ENCODE measurements at regions of chr9 and their contacts with region 1.

Region 1: DNA sequence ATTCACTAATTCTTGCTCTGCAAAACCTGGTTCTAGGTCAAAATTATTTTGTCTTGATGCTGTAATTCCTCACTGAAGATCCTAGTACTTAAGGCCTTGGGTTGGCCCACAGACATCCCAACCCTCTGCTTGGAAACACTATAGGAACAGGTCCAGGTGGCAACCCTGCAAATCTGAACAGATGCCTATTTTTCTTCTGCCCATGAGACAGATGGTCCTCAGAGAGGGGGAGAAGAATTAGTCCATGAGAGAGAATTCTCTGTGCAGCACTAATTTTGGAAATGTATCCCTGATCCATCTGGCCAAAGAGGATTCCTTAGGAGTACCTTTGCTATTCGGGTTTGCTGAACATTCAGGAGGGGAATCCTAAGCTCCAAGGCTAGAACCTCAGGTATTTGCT is 156.3 kb downstream of the ELAVL2 start:
- DNase-seq: no peak
- ATAC-seq: no peak
- H3K4me3 ChIP-seq: no peak overlapping the region
- H3K27ac ChIP-seq: no peak overlapping the region
- H3K4me1 ChIP-seq: no peaks in the 10 kb centered on the region
- H3K27me3 ChIP-seq: no peaks in the 10 kb centered on the region
- CTCF ChIP-seq: no peak

Region 2: GRCh38 chr9:23702311-23702922 is 32.6 kb after region 1 on chr9:
- intact Hi-C with region 1: loop called (anchors 5 kb)
- DNase-seq: no peak
- ATAC-seq: no peak
- H3K4me3 ChIP-seq: no peak overlapping the region
- H3K27ac ChIP-seq: no peak overlapping the region
- H3K4me1 ChIP-seq: no peaks in the 10 kb centered on the region
- H3K27me3 ChIP-seq: no peaks in the 10 kb centered on the region
- CTCF ChIP-seq: no peak

Measured in upper lobe of right lung (tissue), 1 donor.